ENCODE measurements at regions of chr12 and their contacts with region 1.

Region 1: GRCh38 chr12:70711831-70712230 is 74.6 kb upstream of the PTPRB start:
- DNase-seq: no peak
- ATAC-seq: no peak
- H3K4me3 ChIP-seq: no peak overlapping the region
- H3K27ac ChIP-seq: no peak overlapping the region
- H3K4me1 ChIP-seq: no peaks in the 10 kb centered on the region
- H3K27me3 ChIP-seq: no peaks in the 10 kb centered on the region; the same call in 1 of the 2 replicates
- CTCF ChIP-seq: no peak

Region 2: GRCh38 chr12:70165450-70165849 is 546.4 kb before region 1 on chr12:
- CTCF ChIA-PET with region 1: no interaction called
- POLR2A ChIA-PET with region 1: no interaction called
- in situ Hi-C with region 1: no loop called
- intact Hi-C with region 1: loop called (anchors 5 kb)
- DNase-seq: no peak
- ATAC-seq: no peak
- H3K4me3 ChIP-seq: no peak overlapping the region
- H3K27ac ChIP-seq: no peak overlapping the region
- H3K4me1 ChIP-seq: no peaks in the 10 kb centered on the region
- H3K27me3 ChIP-seq: no peaks in the 10 kb centered on the region
- CTCF ChIP-seq: no peak

Region 3: GRCh38 chr12:70686299-70686698 is 25.5 kb before region 1 on chr12:
- CTCF ChIA-PET with region 1: no interaction called
- POLR2A ChIA-PET with region 1: no interaction called
- in situ Hi-C with region 1: no loop called
- intact Hi-C with region 1: no loop called
- DNase-seq: no peak
- ATAC-seq: no peak
- H3K4me3 ChIP-seq: no peak overlapping the region
- H3K27ac ChIP-seq: no peak overlapping the region
- H3K4me1 ChIP-seq: no peaks in the 10 kb centered on the region
- H3K27me3 ChIP-seq: no peaks in the 10 kb centered on the region
- CTCF ChIP-seq: no peak

Measured in Panc1 (cell line).